ENCODE measurements at regions of chr1 and their contacts with region 1.

Region 1: DNA sequence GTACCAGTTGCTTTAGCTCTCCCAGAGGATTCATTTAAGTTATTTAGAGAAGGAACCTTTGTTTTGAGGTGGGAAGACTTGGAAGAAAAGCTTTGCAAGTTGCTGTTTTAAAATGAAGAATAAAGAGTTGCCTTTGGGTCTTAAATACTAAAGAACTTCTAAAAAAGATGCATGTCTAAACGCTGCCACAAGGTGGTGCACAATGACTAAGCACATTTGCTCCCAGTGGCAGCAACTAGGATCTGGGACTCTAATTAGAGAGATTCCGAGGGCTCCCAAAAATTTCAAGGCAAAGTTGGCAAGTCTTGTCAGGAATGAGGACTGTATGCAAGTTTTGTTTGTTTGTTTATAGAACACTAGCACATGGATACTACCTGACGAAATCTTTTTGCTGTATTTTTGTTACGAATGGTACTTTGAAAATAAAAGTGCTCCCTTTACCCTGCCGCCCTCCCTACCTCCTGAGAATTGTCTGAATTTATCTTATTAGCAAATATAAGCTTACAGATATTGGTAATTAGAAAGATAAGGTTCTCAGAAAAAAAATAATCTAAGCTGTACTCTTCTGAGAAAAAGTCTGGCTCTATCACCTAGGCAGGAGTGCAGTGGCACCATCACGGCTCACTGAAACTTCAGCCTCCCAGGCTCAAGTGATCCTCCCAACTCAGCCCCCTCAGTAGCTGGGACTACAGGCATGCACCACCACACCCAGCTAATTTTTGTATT is 121.8 kb downstream of the HFM1 start:
- DNase-seq: peak; percentile 73
- H3K4me3 ChIP-seq: peak overlapping the region in 2 of 4 donors; percentile 20
- H3K27ac ChIP-seq: no peak overlapping the region
- H3K4me1 ChIP-seq: peaks cover 0 to 5% (median 0%) of the 10 kb centered on the region in 4 donors
- H3K27me3 ChIP-seq: no peaks in the 10 kb centered on the region
- CTCF ChIP-seq: peak; percentile 41 to 79 (median 70)
- EP300 ChIP-seq: no peak
- POLR2A ChIP-seq: no peak

Region 2: GRCh38 chr1:91929250-91929649 is 646.4 kb after region 1 on chr1:
- intact Hi-C with region 1: loop called (anchors 5 kb)
- DNase-seq: no peak
- H3K4me3 ChIP-seq: no peak overlapping the region
- H3K27ac ChIP-seq: no peak overlapping the region
- H3K4me1 ChIP-seq: no peaks in the 10 kb centered on the region
- H3K27me3 ChIP-seq: no peaks in the 10 kb centered on the region
- CTCF ChIP-seq: no peak
- EP300 ChIP-seq: no peak
- POLR2A ChIP-seq: no peak